ENCODE measurements at regions of chr12 and their contacts with region 1.

Region 1: GRCh38 chr12:104381731-104382480 is 74.8 kb upstream of the CHST11 start:
- DNase-seq: peak; percentile 78
- H3K4me3 ChIP-seq: no peak overlapping the region
- H3K27ac ChIP-seq: no peak overlapping the region
- H3K4me1 ChIP-seq: no peaks in the 10 kb centered on the region
- H3K27me3 ChIP-seq: no peaks in the 10 kb centered on the region
- CTCF ChIP-seq: peak; percentile 96

Region 2: GRCh38 chr12:104011261-104011660 is 370.6 kb before region 1 on chr12:
- CTCF ChIA-PET with region 1: no interaction called
- POLR2A ChIA-PET with region 1: no interaction called
- intact Hi-C with region 1: no loop called
- DNase-seq: no peak
- H3K4me3 ChIP-seq: no peak overlapping the region
- H3K27ac ChIP-seq: no peak overlapping the region
- H3K4me1 ChIP-seq: no peaks in the 10 kb centered on the region
- H3K27me3 ChIP-seq: no peaks in the 10 kb centered on the region
- CTCF ChIP-seq: no peak

Region 3: DNA sequence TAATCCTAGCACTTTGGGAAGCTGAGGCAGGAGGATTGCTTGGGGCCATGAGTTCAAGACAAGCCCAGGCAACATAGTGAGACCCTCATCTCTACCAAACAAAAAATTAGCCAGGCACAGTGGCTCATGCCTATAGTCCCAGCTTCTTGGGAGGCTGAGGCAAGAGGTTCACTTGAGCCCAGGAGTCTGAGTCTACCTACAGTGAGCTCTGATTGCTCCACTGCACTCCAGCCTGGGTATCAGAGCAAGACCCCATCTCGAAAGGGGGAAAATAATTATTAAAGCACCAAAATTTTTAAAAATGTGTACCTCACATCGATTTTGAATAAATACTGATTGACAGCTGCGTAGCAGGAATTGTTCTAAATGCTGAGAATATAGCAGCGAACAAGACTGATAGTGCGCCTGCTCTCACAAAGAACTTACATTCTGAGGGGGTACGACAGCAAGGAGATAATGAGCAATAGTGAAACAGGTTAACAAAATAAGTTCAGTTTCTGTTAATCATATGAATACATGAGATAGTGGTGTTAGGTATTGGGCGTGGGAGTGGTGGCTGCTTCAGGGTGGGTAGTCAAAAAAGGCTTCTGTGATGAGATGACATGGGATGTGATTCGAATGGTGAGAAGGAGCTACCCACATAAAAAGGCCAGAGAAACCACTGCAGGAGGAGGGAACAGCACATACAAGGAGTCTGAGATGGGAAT is 298.0 kb before region 1 on chr12:
- CTCF ChIA-PET with region 1: no interaction called
- POLR2A ChIA-PET with region 1: no interaction called
- intact Hi-C with region 1: no loop called
- DNase-seq: no peak
- H3K4me3 ChIP-seq: no peak overlapping the region
- H3K27ac ChIP-seq: no peak overlapping the region
- H3K4me1 ChIP-seq: no peaks in the 10 kb centered on the region
- H3K27me3 ChIP-seq: no peaks in the 10 kb centered on the region
- CTCF ChIP-seq: no peak

Region 4: GRCh38 chr12:104121001-104121400 is 260.9 kb before region 1 on chr12:
- CTCF ChIA-PET with region 1: no interaction called
- POLR2A ChIA-PET with region 1: no interaction called
- intact Hi-C with region 1: no loop called
- DNase-seq: no peak
- H3K4me3 ChIP-seq: no peak overlapping the region
- H3K27ac ChIP-seq: no peak overlapping the region
- H3K4me1 ChIP-seq: no peaks in the 10 kb centered on the region
- H3K27me3 ChIP-seq: no peaks in the 10 kb centered on the region
- CTCF ChIP-seq: no peak

Region 5: DNA sequence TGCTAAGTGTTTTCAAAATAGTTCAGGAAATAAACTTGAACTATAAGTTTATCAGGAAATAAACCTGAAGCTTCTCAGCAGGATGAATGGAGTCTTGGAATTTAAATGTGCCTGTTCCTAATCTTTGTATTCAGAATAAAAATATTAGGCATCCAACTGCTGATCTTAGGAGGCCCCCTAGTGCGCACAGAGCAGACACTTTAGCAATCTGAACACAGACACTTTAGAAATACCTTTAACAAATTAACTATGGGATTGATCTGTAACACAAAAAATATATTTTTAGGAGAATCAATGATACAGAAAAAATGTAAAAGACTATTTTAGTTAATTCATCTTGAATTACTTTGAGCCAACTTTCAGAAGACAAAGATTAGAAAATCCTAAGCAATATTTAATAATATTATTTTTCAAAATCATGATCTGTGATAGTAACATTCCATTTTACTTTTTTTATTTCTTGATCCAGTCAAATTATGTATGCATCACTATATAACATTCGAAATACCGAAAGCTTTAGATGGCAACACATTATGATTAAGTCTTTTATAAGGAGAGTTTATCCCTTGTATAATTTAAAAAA is 495.3 kb after region 1 on chr12:
- CTCF ChIA-PET with region 1: no interaction called
- POLR2A ChIA-PET with region 1: no interaction called
- intact Hi-C with region 1: loop called (anchors 5 kb)
- DNase-seq: peak; percentile 44
- H3K4me3 ChIP-seq: no peak overlapping the region
- H3K27ac ChIP-seq: no peak overlapping the region
- H3K4me1 ChIP-seq: no peaks in the 10 kb centered on the region
- H3K27me3 ChIP-seq: no peaks in the 10 kb centered on the region
- CTCF ChIP-seq: peak; percentile 58

Region 6: DNA sequence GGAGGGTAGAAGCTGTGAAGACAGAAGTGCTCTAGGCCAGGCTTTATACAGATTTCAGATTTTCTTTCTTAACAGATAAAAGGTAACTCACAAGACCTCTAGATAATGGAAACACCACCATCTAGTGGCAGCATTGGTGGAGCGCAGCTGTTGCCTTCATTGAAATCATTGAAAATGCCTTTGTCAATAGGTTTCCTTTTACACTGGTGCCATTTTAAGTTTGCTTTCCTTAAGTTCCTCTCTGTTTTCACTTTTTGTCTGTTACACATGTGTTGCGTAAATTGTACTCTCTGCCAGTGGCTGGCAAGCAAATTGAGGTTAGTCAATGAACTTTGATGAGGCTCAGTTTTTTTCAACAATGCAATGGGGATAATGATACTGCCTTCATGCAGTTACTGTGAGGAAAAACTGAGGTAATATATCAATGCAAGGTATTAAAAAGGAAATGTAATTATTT is 671.2 kb after region 1 on chr12:
- CTCF ChIA-PET with region 1: interaction called, 8 read pairs
- POLR2A ChIA-PET with region 1: no interaction called
- intact Hi-C with region 1: loop called (anchors 2 kb)
- DNase-seq: peak; percentile 84
- H3K4me3 ChIP-seq: no peak overlapping the region
- H3K27ac ChIP-seq: no peak overlapping the region
- H3K4me1 ChIP-seq: no peaks in the 10 kb centered on the region
- H3K27me3 ChIP-seq: no peaks in the 10 kb centered on the region
- CTCF ChIP-seq: peak; percentile 94

Region 7: DNA sequence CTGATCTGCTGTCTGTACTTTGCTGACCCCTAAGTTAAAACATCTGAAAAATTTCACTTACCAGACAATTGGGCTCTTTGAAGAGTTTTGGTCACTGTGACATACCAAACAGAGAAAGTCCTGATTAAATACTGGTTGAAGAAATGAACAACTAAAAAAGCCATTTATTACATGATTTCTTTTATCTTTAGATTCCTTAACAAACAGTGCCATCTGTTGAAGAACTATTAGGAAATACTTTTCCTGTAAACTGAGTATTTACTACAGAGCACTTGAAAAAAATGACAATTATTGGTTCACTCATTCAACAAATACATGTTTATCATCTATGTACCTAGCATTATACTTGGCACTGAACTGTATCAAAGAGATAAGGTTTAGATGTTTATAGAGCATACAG is 719.1 kb after region 1 on chr12:
- CTCF ChIA-PET with region 1: no interaction called
- POLR2A ChIA-PET with region 1: no interaction called
- intact Hi-C with region 1: loop called (anchors 5 kb)
- DNase-seq: no peak
- H3K4me3 ChIP-seq: no peak overlapping the region
- H3K27ac ChIP-seq: no peak overlapping the region
- H3K4me1 ChIP-seq: no peaks in the 10 kb centered on the region
- H3K27me3 ChIP-seq: no peaks in the 10 kb centered on the region
- CTCF ChIP-seq: peak; percentile 40; the same call in 1 of the 2 replicates